ENCODE measurements at regions of chr3 and their contacts with region 1.

Region 1: GRCh38 chr3:172710664-172711453 is at the start of gene NCEH1:
- DNase-seq: peak; percentile 83
- H3K4me3 Mint-ChIP-seq: peak within 1 kb of the TSS; percentile 95
- H3K27ac Mint-ChIP-seq: peak within 1 kb of the TSS; percentile 66
- H3K4me1 Mint-ChIP-seq: peaks cover 28% of the 10 kb centered on the region
- H3K27me3 Mint-ChIP-seq: peaks cover 4% of the 10 kb centered on the region
- total RNA-seq, gene NCEH1: 7.2 to 9.6 TPM

Region 2: GRCh38 chr3:172692751-172693338 is 18.0 kb before region 1 on chr3:
- CTCF ChIA-PET with region 1: interaction called, 13 read pairs
- POLR2A ChIA-PET with region 1: interaction called, 3 read pairs
- DNase-seq: no peak
- H3K4me3 Mint-ChIP-seq: no peak overlapping the region
- H3K27ac Mint-ChIP-seq: no peak overlapping the region
- H3K4me1 Mint-ChIP-seq: peaks cover 13% of the 10 kb centered on the region
- H3K27me3 Mint-ChIP-seq: no peaks in the 10 kb centered on the region

Region 3: GRCh38 chr3:173045770-173046382 is 335.0 kb after region 1 on chr3:
- CTCF ChIA-PET with region 1: no interaction called
- POLR2A ChIA-PET with region 1: no interaction called
- DNase-seq: no peak
- H3K4me3 Mint-ChIP-seq: no peak overlapping the region
- H3K27ac Mint-ChIP-seq: no peak overlapping the region
- H3K4me1 Mint-ChIP-seq: no peaks in the 10 kb centered on the region
- H3K27me3 Mint-ChIP-seq: no peaks in the 10 kb centered on the region

Measured in activated CD4-positive, alpha-beta memory T cell treated with anti-CD3 and anti-CD28 coated beads, Interleukin-2, amount 10 ng/mL, durations not matched to agents 7 days and 5 days (primary cell).